Posterior cingulate gyrus (tissue), 11 donors: ENCODE measurements at regions of chr13 and their contacts with region 1.

Region 1: DNA sequence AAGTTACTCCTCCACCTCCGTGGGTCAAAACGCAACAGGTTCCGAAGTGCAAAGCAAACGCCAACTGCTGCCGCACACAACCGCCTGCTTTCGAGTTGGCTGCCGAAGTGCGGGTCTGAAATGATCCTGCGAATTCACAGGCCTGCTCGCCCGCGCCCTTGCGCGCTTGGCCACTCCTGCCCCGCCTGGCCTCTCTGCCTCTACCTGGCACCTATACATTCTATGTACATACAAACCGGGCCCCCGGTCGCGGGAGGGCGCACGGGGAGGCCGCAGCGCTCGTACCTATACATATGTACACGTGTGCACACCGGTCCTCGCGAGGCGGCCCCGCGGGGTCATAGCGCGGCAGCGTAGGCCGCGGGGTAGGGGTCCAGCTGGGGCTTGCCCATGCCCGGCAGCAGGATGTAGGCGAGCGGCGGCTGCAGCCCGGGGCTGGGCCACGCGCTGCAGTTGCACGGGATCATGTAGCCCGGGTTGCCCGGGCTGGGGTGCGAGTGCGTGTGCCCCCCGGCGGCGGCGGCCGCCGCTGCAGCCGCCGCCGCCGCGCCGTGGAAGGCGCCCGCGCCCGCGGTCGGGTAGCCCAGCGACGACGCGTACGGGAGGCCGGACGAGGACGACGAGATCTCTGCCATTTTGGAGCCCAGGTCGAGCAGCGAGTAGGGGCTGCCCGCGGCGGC is 1.3 kb downstream of the SOX21 start:
- DNase-seq: peak in 3 of 10 donors; percentile 58 to 87 (median 73)

Region 2: DNA sequence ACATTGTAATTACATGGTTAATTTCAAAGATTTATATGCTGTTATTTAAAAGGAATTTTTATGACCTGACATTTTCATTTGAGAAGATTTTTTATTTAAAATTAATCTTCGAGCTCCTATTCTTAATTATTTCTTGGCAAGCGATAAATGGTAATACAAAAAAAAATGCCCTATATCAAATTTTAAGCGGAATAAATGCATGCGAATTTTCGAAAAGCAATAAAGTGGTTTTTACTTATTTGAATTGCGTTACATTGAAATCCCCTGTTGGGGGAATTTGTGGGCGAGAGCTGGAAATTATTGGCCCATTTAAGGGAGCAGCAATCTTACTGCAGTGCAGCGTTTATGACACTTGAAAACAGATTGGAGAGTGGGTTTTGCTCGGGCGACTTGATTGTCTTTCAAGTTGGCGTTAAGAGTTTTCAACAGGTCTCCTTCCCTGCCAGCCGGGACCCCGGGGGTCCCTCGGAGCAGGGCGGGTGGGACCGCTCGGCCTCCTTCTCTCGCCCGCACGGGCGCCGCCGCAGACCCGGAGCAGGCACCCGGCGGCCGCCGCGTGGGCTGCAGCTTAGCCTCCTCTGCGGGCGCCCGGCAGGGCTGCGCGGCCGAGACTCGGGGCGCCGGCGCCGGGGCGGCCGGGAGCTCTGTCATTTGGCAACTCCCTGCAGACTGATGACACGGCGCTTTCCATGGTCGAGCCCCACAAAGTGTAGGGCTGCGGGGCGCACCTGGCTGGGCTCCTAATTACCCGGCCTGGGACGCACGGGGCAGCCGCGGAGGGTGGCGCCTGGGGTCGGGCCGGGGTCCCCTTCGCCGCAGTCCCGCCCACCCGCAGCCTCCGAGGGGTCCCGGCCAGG is 256.4 kb after region 1 on chr13:
- intact Hi-C with region 1: loop called (anchors 5 kb)
- DNase-seq: peak in 6 of 10 donors; percentile 9 to 86 (median 38)

Region 3: GRCh38 chr13:95156208-95156607 is 445.2 kb after region 1 on chr13:
- intact Hi-C with region 1: loop called (anchors 10 kb)
- DNase-seq: no peak

Region 4: GRCh38 chr13:95644601-95645052 is 933.6 kb after region 1 on chr13 and contains the start of gene DZIP1:
- intact Hi-C with region 1: no loop called
- DNase-seq: peak; percentile 57 to 98 (median 86)